Activated CD8-positive, alpha-beta T cell treated with anti-CD3 and anti-CD28 coated beads for 36 hours (primary cell): ENCODE measurements at regions of chr15 and their contacts with region 1.

Region 1: GRCh38 chr15:44738340-44738984 is 2.1 kb downstream of the TRIM69 start:
- DNase-seq: no peak
- ATAC-seq: no peak
- H3K4me3 Mint-ChIP-seq: peak overlapping the region; percentile 67
- H3K27ac Mint-ChIP-seq: peak overlapping the region; percentile 86
- H3K4me1 Mint-ChIP-seq: peaks cover 53% of the 10 kb centered on the region
- H3K27me3 Mint-ChIP-seq: no peaks in the 10 kb centered on the region
- CTCF ChIP-seq: peak; percentile 85

Region 2: DNA sequence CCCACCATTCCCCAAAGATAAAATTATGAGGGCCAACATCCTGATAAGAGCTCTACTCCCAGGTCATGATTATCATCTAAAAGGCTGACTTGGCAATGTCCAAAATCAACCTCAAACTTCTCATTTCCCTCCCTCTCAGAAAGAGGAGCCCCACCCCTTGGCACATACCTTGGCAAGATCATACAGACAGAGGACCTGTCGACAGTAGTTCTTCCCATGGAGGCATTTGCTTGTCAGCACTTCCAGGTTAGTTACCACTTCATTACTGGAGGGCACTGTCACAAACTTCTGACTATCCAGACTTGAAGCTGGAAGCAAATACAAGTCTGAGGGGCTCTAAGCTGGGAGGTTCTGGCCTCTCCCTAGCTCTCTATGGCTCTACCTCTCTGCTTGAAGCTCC is 163.7 kb before region 1 on chr15:
- CTCF ChIA-PET with region 1: interaction called, 50 read pairs
- POLR2A ChIA-PET with region 1: no interaction called
- intact Hi-C with region 1: loop called (anchors 5 kb)
- DNase-seq: no peak
- ATAC-seq: no peak
- H3K4me3 Mint-ChIP-seq: no peak overlapping the region
- H3K27ac Mint-ChIP-seq: peak overlapping the region; percentile 40
- H3K4me1 Mint-ChIP-seq: peaks cover 9% of the 10 kb centered on the region
- H3K27me3 Mint-ChIP-seq: no peaks in the 10 kb centered on the region
- CTCF ChIP-seq: no peak

Region 3: GRCh38 chr15:44593042-44593736 is 145.3 kb before region 1 on chr15:
- CTCF ChIA-PET with region 1: interaction called, 110 read pairs
- POLR2A ChIA-PET with region 1: interaction called, 4 read pairs
- intact Hi-C with region 1: loop called (anchors 5 kb)
- DNase-seq: peak; percentile 21
- ATAC-seq: peak; percentile 73
- H3K4me3 Mint-ChIP-seq: no peak overlapping the region
- H3K27ac Mint-ChIP-seq: peak overlapping the region; percentile 32
- H3K4me1 Mint-ChIP-seq: peaks cover 27% of the 10 kb centered on the region
- H3K27me3 Mint-ChIP-seq: no peaks in the 10 kb centered on the region
- CTCF ChIP-seq: peak; percentile 68

Region 4: DNA sequence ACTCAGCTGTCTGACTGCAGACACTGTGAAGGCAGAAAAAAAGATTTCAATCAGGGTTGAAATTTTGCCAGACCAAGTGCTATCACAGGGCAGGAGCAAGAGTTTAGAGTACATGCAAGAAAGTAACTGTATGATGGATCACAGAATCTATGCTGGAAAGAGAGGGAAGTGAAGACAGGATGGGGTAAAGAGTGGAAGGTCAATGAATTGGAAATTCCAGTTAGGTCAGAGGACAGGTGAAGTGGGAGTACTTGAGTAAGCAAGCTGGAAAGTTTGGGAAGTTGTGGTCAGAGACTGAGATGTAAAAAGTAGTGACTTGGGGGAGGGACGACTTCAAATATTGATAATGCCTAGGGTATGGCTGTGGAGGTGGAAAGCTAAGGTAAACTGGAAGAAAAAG is 82.2 kb before region 1 on chr15:
- CTCF ChIA-PET with region 1: interaction called, 19 read pairs
- POLR2A ChIA-PET with region 1: interaction called, 1,862 read pairs
- intact Hi-C with region 1: no loop called
- DNase-seq: no peak
- ATAC-seq: no peak
- H3K4me3 Mint-ChIP-seq: no peak overlapping the region
- H3K27ac Mint-ChIP-seq: peak overlapping the region; percentile 28
- H3K4me1 Mint-ChIP-seq: peaks cover 35% of the 10 kb centered on the region
- H3K27me3 Mint-ChIP-seq: no peaks in the 10 kb centered on the region
- CTCF ChIP-seq: no peak

Region 5: GRCh38 chr15:44676676-44677075 is 61.8 kb before region 1 on chr15:
- CTCF ChIA-PET with region 1: interaction called, 21 read pairs
- POLR2A ChIA-PET with region 1: interaction called, 1,862 read pairs
- intact Hi-C with region 1: no loop called
- DNase-seq: peak; percentile 73
- ATAC-seq: peak; percentile 69
- H3K4me3 Mint-ChIP-seq: peak overlapping the region; percentile 64
- H3K27ac Mint-ChIP-seq: peak overlapping the region; percentile 90
- H3K4me1 Mint-ChIP-seq: peaks cover 81% of the 10 kb centered on the region
- H3K27me3 Mint-ChIP-seq: no peaks in the 10 kb centered on the region
- CTCF ChIP-seq: no peak

Region 6: GRCh38 chr15:44753345-44753744 is 14.9 kb after region 1 on chr15:
- CTCF ChIA-PET with region 1: interaction called, 27 read pairs
- POLR2A ChIA-PET with region 1: no interaction called
- intact Hi-C with region 1: no loop called
- DNase-seq: no peak
- ATAC-seq: no peak
- H3K4me3 Mint-ChIP-seq: no peak overlapping the region
- H3K27ac Mint-ChIP-seq: no peak overlapping the region
- H3K4me1 Mint-ChIP-seq: peaks cover 21% of the 10 kb centered on the region
- H3K27me3 Mint-ChIP-seq: no peaks in the 10 kb centered on the region
- CTCF ChIP-seq: no peak

Region 7: DNA sequence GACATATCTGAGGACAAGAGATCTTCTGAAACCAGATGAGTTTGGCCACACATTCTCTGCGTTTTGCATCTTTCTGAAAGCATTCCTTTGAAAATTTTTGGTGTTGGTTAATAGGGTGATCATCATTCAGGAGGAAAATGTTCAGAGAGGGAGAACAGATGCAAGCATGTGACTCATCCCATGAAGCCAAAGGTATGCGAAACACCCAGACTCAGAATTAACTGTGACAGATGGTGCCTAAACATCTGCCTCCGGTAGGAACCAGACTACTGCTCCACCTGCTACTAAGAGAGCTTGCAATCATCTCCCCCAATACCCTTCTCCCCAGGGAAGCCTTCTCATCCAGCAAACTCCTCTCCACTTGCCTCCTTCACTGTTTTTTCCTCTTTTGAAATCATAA is 44.1 kb after region 1 on chr15:
- CTCF ChIA-PET with region 1: interaction called, 12 read pairs
- POLR2A ChIA-PET with region 1: no interaction called
- intact Hi-C with region 1: no loop called
- DNase-seq: no peak
- ATAC-seq: no peak
- H3K4me3 Mint-ChIP-seq: no peak overlapping the region
- H3K27ac Mint-ChIP-seq: no peak overlapping the region
- H3K4me1 Mint-ChIP-seq: peaks cover 24% of the 10 kb centered on the region
- H3K27me3 Mint-ChIP-seq: no peaks in the 10 kb centered on the region
- CTCF ChIP-seq: no peak